ENCODE measurements at regions of chr11 and their contacts with region 1.

Region 1: DNA sequence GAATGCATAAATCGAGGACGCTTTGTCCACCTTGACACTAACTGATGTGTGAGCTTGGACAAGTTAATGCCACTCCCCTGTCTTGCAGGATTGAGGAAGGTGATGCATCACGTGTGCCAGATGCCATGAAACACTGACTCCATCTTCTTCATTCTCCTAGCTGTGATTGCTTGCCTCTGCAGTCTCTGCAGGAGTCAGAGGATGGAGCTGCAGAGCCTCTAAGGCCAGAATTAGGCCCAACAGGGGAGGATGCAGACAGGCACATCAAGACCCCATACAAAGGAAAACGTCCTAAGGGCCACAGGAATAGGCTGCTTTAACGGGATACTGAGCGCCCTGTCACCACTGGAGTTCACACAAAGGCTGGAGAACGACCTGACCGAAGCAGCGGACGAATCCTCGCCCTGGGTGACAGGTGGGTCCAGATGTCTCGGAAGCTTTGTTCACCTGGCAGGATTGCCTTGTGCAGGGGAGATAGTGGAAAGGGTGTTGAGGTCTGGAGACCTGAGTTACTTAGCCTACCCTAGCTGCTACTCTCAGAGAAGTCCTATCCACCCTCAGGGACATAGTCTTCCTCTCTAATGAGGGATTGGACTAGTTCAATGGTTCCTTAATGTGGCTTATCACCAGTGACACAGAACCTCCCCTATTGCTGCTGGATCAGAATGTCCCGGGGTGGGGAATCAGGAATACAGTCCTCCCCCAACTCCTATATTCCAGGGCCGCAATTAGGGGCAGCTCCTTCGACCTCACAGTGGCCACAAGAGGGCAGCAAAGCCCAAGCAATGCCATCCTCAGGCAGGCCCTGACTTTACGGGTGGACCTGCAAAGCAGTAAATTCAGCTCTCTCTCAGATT is 32.4 kb downstream of the DBX1 start:
- DNase-seq: no peak
- H3K4me3 ChIP-seq: no peak overlapping the region
- H3K27me3 ChIP-seq: no peaks in the 10 kb centered on the region
- CTCF ChIP-seq: peak; percentile 85

Region 2: GRCh38 chr11:19903620-19904069 is 224.3 kb before region 1 on chr11:
- CTCF ChIA-PET with region 1: interaction called, 78 read pairs
- POLR2A ChIA-PET with region 1: no interaction called
- DNase-seq: no peak
- H3K4me3 ChIP-seq: no peak overlapping the region
- H3K27me3 ChIP-seq: no peaks in the 10 kb centered on the region
- CTCF ChIP-seq: peak; percentile 88

Region 3: DNA sequence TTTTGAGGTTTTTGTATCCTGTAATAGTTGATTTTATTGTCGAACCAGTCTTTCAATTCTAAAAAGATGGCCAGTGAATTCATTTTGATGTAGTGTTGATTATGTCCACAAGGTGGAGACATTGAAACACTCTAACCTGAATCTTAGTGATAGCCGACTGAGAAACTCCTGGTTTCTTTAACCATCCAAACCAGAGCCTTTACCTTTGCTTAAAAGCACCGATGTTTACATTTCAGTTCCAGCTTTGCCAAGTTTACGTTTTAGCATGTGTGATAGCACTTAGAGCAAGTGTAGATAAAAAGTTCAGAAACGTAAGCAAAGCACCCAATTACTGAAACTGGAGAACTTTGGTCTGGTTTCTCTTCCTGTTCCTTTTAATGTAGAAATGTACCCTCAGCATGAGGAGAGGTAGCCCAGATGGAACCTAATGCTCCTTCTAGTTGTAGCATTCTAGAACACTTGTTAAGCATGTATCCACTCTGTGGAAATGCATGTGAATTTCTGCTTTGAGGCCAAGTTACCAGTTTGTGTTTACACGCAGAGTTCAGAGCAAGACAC is 176.3 kb before region 1 on chr11:
- CTCF ChIA-PET with region 1: interaction called, 91 read pairs
- POLR2A ChIA-PET with region 1: no interaction called
- DNase-seq: no peak
- H3K4me3 ChIP-seq: no peak overlapping the region
- H3K27me3 ChIP-seq: no peaks in the 10 kb centered on the region
- CTCF ChIP-seq: peak; percentile 56

Region 4: DNA sequence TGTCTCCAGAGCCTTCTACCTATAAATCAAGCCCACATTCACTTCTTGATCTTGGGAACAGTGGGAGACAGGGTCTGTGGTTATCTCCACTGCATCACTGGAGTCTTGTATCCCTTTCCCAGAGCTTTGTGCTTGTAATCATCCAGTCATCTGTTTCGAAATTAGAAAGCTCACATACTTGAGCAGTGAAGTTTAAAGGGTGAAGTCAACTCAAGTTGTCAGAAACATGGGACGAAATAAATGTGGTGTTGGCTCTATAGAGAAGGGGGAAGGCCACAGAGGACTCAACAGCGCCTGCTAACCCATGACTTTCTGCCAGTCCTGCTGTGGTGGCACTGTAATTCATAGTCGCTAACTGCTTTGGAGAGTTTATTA is 165.1 kb before region 1 on chr11:
- CTCF ChIA-PET with region 1: interaction called, 18 read pairs
- POLR2A ChIA-PET with region 1: no interaction called
- DNase-seq: peak; percentile 60
- H3K4me3 ChIP-seq: no peak overlapping the region
- H3K27me3 ChIP-seq: no peaks in the 10 kb centered on the region
- CTCF ChIP-seq: no peak

Region 5: GRCh38 chr11:20110908-20111669 is 16.8 kb before region 1 on chr11:
- CTCF ChIA-PET with region 1: interaction called, 47 read pairs
- POLR2A ChIA-PET with region 1: no interaction called
- DNase-seq: peak; percentile 98
- H3K4me3 ChIP-seq: no peak overlapping the region
- H3K27me3 ChIP-seq: no peaks in the 10 kb centered on the region
- CTCF ChIP-seq: peak; percentile 91

Region 6: GRCh38 chr11:20226933-20227332 is 99.0 kb after region 1 on chr11:
- CTCF ChIA-PET with region 1: no interaction called
- POLR2A ChIA-PET with region 1: no interaction called
- DNase-seq: no peak
- H3K4me3 ChIP-seq: no peak overlapping the region
- H3K27me3 ChIP-seq: no peaks in the 10 kb centered on the region
- CTCF ChIP-seq: no peak

Region 7: DNA sequence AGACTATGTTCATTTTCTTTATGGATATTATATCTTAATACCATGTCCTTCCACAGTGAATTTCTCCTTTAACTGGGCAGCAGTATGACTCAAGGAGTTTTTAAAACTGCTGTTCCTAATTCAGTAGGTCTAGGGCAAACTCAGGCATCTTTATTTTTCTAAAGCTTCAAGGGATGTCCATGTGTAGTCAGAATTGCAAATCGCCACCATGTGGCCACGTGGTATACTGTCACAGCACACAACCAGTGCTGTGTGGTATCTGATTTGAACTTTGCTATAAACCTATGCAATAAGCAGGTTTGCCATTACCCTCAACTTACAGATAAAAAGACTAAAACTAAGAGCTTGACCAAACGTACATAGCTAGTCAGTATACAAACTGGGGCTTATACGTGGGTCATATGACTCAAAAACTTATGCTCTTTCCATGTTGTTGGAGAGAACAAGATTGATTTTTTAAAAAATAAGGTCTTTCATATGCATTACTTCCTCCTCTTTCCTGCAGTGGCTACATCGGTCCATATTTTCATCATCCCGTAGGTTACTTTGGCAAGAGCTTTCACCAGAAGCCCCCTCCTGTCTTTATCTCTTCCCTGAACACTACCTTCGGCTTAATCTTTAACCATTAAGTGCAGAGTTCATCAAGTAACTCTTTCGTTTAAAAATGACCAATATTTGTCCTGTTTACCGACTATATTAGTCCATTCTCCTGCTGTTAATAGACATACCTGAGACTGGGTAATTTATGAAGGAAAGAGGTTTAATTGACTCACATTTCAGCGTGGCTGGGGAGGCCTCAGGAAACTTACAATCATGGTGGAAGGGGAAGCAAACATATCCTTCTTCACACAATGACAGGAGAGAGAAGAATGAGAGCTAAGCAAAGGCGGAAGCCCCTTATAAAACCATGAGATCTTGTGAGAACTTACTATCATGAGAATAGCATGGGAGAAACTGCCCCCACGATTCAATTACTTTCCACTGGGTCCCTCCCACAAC is 227.6 kb after region 1 on chr11:
- CTCF ChIA-PET with region 1: interaction called, 99 read pairs
- POLR2A ChIA-PET with region 1: no interaction called
- DNase-seq: no peak
- H3K4me3 ChIP-seq: no peak overlapping the region
- H3K27me3 ChIP-seq: peaks cover 5% of the 10 kb centered on the region
- CTCF ChIP-seq: peak; percentile 78

Measured in BJ (cell line).